ENCODE measurements at regions of chr9 and their contacts with region 1.

Region 1: GRCh38 chr9:137064027-137064879 is 6.1 kb downstream of the SAPCD2 start:
- DNase-seq: peak; percentile 27 to 51 (median 38)
- H3K4me3 ChIP-seq: no peak overlapping the region
- H3K27ac ChIP-seq: no peak overlapping the region
- H3K4me1 ChIP-seq: peaks cover 0 to 22% (median 8%) of the 10 kb centered on the region in 4 experiments
- H3K27me3 ChIP-seq: no peaks in the 10 kb centered on the region

Region 2: DNA sequence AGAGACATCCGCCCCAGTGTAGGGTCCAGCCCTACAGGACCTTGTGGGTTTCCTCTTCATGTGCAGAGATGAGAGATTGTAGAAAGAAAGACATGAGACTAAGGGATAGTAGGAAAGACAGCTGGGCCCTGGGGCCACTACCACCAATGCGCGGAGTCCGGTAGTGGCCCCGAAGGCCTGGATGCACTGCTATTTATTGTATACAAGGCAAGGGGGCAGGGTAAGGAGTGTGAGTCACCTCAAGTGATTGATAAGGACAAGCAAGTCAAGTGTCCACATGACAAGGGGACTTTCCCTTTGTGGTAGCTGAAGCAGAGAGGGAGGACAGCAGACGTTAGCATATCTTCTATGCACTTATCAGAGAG is 279.3 kb before region 1 on chr9:
- CTCF ChIA-PET with region 1: interaction called, 10 read pairs
- POLR2A ChIA-PET with region 1: no interaction called
- DNase-seq: peak in 1 of 3 donors; percentile 54
- H3K4me3 ChIP-seq: no peak overlapping the region
- H3K27ac ChIP-seq: no peak overlapping the region
- H3K4me1 ChIP-seq: peaks cover 0 to 19% (median 7%) of the 10 kb centered on the region in 4 experiments
- H3K27me3 ChIP-seq: no peaks in the 10 kb centered on the region

Region 3: DNA sequence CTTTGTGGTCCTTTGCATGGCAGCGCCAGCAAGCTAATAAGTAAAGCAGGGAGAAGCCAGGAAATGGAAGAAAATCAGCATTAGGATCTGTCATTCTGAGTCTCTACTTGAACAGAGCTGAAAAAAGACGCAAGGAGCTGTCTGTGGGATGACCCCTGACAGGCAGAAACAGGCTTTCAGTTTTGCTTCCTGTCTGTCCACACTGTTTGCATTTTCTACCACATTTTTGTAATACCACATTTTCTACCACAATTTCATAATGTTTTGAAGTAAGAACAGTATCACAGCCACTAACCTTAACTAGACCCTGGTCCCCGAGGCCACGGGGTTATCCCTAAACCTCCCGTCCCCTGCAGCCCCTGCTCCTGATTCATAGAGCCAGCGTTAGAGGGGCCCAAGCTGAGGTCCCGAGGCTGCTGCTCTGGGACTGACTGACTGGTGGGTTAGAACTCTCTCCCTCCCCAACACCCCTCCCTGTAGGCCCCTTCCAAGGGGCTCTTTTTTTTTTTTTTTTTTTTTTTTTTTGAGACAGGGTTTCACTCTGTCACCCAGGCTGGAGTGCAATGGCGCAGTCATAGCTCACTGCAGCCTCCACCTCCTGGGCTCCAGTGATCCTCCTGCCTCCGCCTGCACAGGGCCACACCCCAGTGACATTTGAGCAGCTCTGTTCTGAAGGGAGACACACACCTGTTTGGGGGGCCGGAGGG is 63.9 kb before region 1 on chr9:
- CTCF ChIA-PET with region 1: no interaction called
- POLR2A ChIA-PET with region 1: no interaction called
- DNase-seq: peak in 2 of 3 donors; percentile 70 to 72
- H3K4me3 ChIP-seq: no peak overlapping the region
- H3K27ac ChIP-seq: no peak overlapping the region
- H3K4me1 ChIP-seq: peaks cover 0 to 46% (median 40%) of the 10 kb centered on the region in 4 experiments
- H3K27me3 ChIP-seq: peaks cover 0 to 17% (median 0%) of the 10 kb centered on the region in 5 experiments

Region 4: GRCh38 chr9:137046098-137046787 is 18.0 kb before region 1 on chr9 and contains the start of gene NPDC1:
- CTCF ChIA-PET with region 1: interaction called, 48 read pairs
- POLR2A ChIA-PET with region 1: no interaction called
- DNase-seq: peak; percentile 72 to 86 (median 86)
- H3K4me3 ChIP-seq: peak within 1 kb of the TSS; percentile 51 to 85 (median 73)
- H3K27ac ChIP-seq: no peak within 1 kb of the TSS
- H3K4me1 ChIP-seq: peaks cover 0 to 50% (median 45%) of the 10 kb centered on the region in 4 experiments
- H3K27me3 ChIP-seq: peaks cover 0 to 39% (median 12%) of the 10 kb centered on the region in 5 experiments